Heart left ventricle (tissue), 16 donors: ENCODE measurements at regions of chr15 and their contacts with region 1.

Region 1: GRCh38 chr15:97960364-97961066 is at the start of gene ARRDC4:
- DNase-seq: peak; percentile 100
- ATAC-seq: peak; percentile 99 to 100 (median 99)
- H3K4me3 ChIP-seq: peak within 1 kb of the TSS; percentile 64 to 99 (median 92)
- H3K27ac ChIP-seq: peak within 1 kb of the TSS; percentile 79 to 98 (median 92)
- H3K4me1 ChIP-seq: peaks cover 0 to 44% (median 24%) of the 10 kb centered on the region in 12 donors
- H3K27me3 ChIP-seq: no peaks in the 10 kb centered on the region
- CTCF ChIP-seq: no peak
- POLR2A ChIP-seq: peak; percentile 59 to 93
- total RNA-seq, gene ARRDC4: 9.7 to 49.6 (median 19.0) TPM

Region 2: GRCh38 chr15:98076021-98076816 is 115.7 kb after region 1 on chr15:
- intact Hi-C with region 1: loop called in 1 of 10 experiments (anchors 1 kb)
- DNase-seq: peak in 4 of 5 donors; percentile 44 to 65 (median 51)
- ATAC-seq: peak; percentile 69 to 92 (median 92)
- H3K4me3 ChIP-seq: no peak overlapping the region
- H3K27ac ChIP-seq: peak overlapping the region in 8 of 12 donors; percentile 6 to 73 (median 36)
- H3K4me1 ChIP-seq: peaks cover 0 to 32% (median 9%) of the 10 kb centered on the region in 12 donors
- H3K27me3 ChIP-seq: no peaks in the 10 kb centered on the region
- CTCF ChIP-seq: no peak
- POLR2A ChIP-seq: no peak